Transverse colon (tissue), 4 donors: ENCODE measurements at regions of chr2 and their contacts with region 1.

Region 1: DNA sequence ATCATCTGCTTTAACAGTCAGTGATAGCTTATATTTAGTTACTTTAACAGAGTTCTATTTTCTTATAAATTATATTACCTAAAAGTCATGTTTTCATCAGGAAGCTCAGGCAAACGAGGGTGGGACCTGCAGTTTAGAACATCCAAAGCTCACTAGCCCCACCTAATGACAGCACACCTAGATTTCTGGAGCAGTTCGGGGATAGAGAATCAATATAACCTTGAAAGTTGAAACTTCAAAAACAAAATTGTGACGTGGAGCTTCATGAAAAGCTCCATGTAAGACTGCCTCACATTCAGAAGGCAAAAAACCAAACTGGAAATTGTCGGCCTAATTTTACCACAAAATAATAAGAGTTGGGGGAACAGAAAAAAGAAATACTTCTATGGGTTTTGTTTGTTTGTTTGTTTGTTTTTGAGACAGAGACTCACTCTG is 185.9 kb upstream of the CCDC150 start:
- DNase-seq: peak; percentile 31
- H3K4me3 ChIP-seq: no peak overlapping the region
- H3K27ac ChIP-seq: no peak overlapping the region
- H3K4me1 ChIP-seq: peaks cover 0 to 3% (median 0%) of the 10 kb centered on the region in 4 donors
- H3K27me3 ChIP-seq: no peaks in the 10 kb centered on the region
- CTCF ChIP-seq: peak; percentile 27 to 41 (median 32)
- EP300 ChIP-seq: no peak
- POLR2A ChIP-seq: no peak

Region 2: DNA sequence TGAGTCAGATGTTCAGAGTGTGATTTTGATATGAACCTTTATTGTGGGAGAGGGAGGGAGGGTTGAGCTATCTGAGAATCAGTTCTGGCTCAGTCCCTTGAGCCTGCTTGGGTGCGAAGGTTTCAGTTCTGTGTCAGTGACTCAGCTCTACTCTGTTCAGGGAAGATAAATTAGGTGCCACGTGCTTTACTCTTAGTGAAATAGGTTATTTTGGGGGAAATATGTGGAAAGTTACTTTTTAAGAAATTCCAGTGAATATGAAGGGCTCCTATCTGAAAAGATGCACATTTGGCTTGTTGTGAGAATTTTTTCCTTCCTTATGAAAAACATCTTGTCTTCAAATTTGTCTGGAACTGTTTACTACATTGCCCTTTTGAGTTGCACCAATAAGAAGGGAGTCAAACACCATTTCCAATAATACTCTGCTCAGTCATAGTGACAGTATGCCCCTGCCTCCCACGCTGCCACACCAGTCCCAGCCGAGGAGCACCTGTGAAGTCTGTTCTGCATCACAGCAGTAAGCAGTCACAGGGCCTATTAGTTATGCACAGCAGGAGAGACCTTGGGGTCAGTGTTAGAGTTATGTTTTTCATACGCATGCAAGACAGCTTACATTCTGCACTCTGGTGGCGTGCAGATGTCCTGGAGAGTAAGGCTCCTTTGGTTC is 352.2 kb before region 1 on chr2:
- in situ Hi-C with region 1: loop called in 1 of 4 experiments (anchors 25 kb)
- intact Hi-C with region 1: no loop called
- DNase-seq: peak; percentile 30
- H3K4me3 ChIP-seq: no peak overlapping the region
- H3K27ac ChIP-seq: peak overlapping the region in 1 of 4 donors; percentile 10
- H3K4me1 ChIP-seq: peaks cover 0 to 6% (median 3%) of the 10 kb centered on the region in 4 donors
- H3K27me3 ChIP-seq: no peaks in the 10 kb centered on the region
- CTCF ChIP-seq: no peak
- EP300 ChIP-seq: no peak
- POLR2A ChIP-seq: no peak

Region 3: GRCh38 chr2:196160101-196160500 is 293.5 kb before region 1 on chr2:
- in situ Hi-C with region 1: no loop called
- intact Hi-C with region 1: no loop called
- DNase-seq: peak; percentile 62
- H3K4me3 ChIP-seq: no peak overlapping the region
- H3K27ac ChIP-seq: peak overlapping the region; percentile 63 to 72 (median 69)
- H3K4me1 ChIP-seq: peaks cover 0 to 15% (median 7%) of the 10 kb centered on the region in 4 donors
- H3K27me3 ChIP-seq: no peaks in the 10 kb centered on the region
- CTCF ChIP-seq: no peak
- EP300 ChIP-seq: no peak
- POLR2A ChIP-seq: peak; percentile 18

Region 4: GRCh38 chr2:197675711-197676188 is 1222.1 kb after region 1 on chr2:
- in situ Hi-C with region 1: no loop called
- intact Hi-C with region 1: no loop called
- DNase-seq: no peak
- H3K4me3 ChIP-seq: peak overlapping the region in 2 of 4 donors; percentile 14 to 39
- H3K27ac ChIP-seq: peak overlapping the region; percentile 47 to 62 (median 54)
- H3K4me1 ChIP-seq: no peaks in the 10 kb centered on the region
- H3K27me3 ChIP-seq: no peaks in the 10 kb centered on the region
- CTCF ChIP-seq: peak in 1 of 5 experiments; percentile 20
- EP300 ChIP-seq: no peak
- POLR2A ChIP-seq: no peak